Activated CD4-positive, alpha-beta memory T cell treated with anti-CD3 and anti-CD28 coated beads for 36 hours (primary cell): ENCODE measurements at regions of chr6 and their contacts with region 1.

Region 1: GRCh38 chr6:149513915-149514314 is 29.1 kb upstream of the ZC3H12D start:
- DNase-seq: no peak
- H3K4me3 Mint-ChIP-seq: no peak overlapping the region
- H3K27ac Mint-ChIP-seq: peak overlapping the region; percentile 23
- H3K4me1 Mint-ChIP-seq: peaks cover 59% of the 10 kb centered on the region
- H3K27me3 Mint-ChIP-seq: no peaks in the 10 kb centered on the region

Region 2: DNA sequence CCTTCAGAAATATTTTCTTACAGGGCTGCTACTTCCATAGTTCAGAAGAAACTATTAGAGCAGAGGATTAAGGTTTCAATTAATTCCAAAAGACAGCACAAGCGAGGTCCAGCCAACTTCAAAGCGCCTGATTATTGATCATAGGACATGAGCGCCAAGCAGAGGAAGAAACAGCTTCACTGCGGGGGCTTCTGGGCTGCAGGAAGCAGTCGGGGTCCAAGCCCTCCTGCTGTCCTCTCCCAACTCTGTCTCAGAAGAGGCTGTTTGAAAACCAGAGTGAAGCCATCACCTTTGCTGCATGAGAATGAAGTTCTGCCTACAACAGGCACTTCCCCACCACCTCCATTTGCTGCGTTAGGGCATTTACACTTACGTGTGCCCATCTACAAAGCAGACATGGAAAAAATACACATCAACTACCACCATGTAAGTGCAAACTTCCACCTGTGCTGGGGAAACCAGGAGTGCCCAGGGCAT is 89.9 kb before region 1 on chr6:
- CTCF ChIA-PET with region 1: interaction called, 14 read pairs
- POLR2A ChIA-PET with region 1: no interaction called
- intact Hi-C with region 1: no loop called
- DNase-seq: no peak
- H3K4me3 Mint-ChIP-seq: no peak overlapping the region
- H3K27ac Mint-ChIP-seq: no peak overlapping the region
- H3K4me1 Mint-ChIP-seq: peaks cover 25% of the 10 kb centered on the region
- H3K27me3 Mint-ChIP-seq: no peaks in the 10 kb centered on the region

Region 3: DNA sequence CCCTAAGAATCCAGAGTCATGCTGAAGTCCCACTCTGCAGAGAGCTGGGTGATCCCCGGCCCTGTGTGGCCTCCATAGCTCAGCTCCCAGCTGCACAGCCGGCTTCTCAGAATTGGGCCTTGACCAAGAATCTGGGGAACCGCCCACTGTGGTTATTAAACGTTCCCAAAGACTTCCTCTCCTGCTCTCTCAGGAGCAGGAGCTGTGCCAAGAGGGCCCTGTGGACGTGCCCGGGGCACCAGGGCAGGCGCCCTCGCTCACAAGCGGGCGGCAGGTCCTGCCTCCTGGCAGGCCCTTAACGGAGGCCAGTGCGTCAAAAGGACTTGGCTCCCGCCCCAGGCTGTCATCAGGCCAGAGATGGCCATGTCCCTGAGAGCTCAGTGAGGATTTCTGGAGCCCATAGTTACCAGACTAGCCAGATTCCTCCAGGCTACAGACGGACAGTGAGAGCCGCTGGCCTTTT is 59.5 kb before region 1 on chr6:
- CTCF ChIA-PET with region 1: interaction called, 10 read pairs
- POLR2A ChIA-PET with region 1: no interaction called
- intact Hi-C with region 1: no loop called
- DNase-seq: no peak
- H3K4me3 Mint-ChIP-seq: no peak overlapping the region
- H3K27ac Mint-ChIP-seq: no peak overlapping the region
- H3K4me1 Mint-ChIP-seq: peaks cover 14% of the 10 kb centered on the region
- H3K27me3 Mint-ChIP-seq: no peaks in the 10 kb centered on the region

Region 4: DNA sequence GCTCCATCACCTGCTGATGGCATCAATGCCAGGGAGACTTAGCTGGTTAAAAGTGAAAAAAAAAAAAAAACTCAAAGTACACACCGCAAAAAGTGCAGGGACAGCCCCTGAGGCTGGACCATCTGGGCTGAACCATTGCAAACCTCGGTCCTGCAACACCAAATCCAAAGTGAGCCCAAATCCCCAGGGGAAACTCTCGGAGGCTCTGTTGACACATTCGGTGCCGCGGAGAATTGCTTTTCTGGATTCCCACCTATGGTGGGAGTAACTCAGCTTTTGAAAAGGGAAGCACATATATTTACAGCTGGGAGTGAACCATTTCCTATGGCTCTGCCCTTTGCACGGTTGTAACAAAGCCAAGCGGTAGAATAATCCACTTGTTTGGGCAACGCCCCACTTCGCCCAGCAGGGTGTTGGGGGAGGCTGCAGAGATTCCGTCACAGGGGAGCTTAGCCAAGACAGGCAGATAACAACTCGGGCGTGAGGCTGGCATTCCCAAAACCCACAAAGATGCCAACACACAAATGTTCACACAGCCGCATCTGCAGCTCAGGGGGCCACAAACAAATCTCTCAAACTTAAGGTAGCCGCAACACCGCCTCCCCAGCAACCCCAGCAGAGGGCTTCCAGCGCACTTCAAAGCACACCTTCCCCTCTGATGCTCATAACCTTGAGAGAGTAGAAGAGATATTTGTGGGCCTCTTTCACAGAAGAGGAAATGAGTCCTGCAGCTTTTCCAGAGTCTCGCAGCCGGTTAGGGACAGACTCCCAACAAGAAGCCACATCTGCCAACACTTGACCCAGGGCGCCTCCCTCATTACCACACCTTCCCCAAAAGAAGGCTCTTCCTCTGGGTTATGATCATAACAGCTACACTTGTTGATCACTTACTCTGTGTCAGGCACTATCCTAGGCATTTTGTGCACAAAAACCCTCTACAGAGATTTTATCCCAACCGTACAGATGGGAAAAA is 40.5 kb before region 1 on chr6:
- CTCF ChIA-PET with region 1: interaction called, 35 read pairs
- POLR2A ChIA-PET with region 1: interaction called, 9 read pairs
- intact Hi-C with region 1: loop called (anchors 10 kb)
- DNase-seq: no peak
- H3K4me3 Mint-ChIP-seq: peak overlapping the region; percentile 21
- H3K27ac Mint-ChIP-seq: peak overlapping the region; percentile 47
- H3K4me1 Mint-ChIP-seq: peaks cover 80% of the 10 kb centered on the region
- H3K27me3 Mint-ChIP-seq: no peaks in the 10 kb centered on the region

Region 5: GRCh38 chr6:149493761-149494320 is 20.1 kb before region 1 on chr6:
- CTCF ChIA-PET with region 1: interaction called, 49 read pairs
- POLR2A ChIA-PET with region 1: interaction called, 40 read pairs
- intact Hi-C with region 1: loop called (anchors 1 kb)
- DNase-seq: no peak
- H3K4me3 Mint-ChIP-seq: peak overlapping the region; percentile 1
- H3K27ac Mint-ChIP-seq: peak overlapping the region; percentile 97
- H3K4me1 Mint-ChIP-seq: peaks cover 79% of the 10 kb centered on the region
- H3K27me3 Mint-ChIP-seq: no peaks in the 10 kb centered on the region

Region 6: GRCh38 chr6:149545754-149546528 is 32.0 kb after region 1 on chr6 and contains the start of gene PPIL4:
- CTCF ChIA-PET with region 1: interaction called, 14 read pairs
- POLR2A ChIA-PET with region 1: no interaction called
- intact Hi-C with region 1: no loop called
- DNase-seq: peak; percentile 97
- H3K4me3 Mint-ChIP-seq: peak within 1 kb of the TSS; percentile 97
- H3K27ac Mint-ChIP-seq: peak within 1 kb of the TSS; percentile 97
- H3K4me1 Mint-ChIP-seq: peaks cover 38% of the 10 kb centered on the region
- H3K27me3 Mint-ChIP-seq: peaks cover 4% of the 10 kb centered on the region
- total RNA-seq, gene PPIL4: 21.5 to 23.6 TPM